ENCODE measurements at regions of chr1 and their contacts with region 1.

Region 1: GRCh38 chr1:47189844-47190508 is at the start of gene PDZK1IP1:
- DNase-seq: peak; percentile 91 to 94 (median 94)
- ATAC-seq: peak; percentile 83
- H3K4me3 ChIP-seq: no peak within 1 kb of the TSS
- H3K27ac ChIP-seq: peak within 1 kb of the TSS; percentile 84 to 92 (median 88)
- H3K4me1 ChIP-seq: peaks cover 45% of the 10 kb centered on the region
- H3K27me3 ChIP-seq: no peaks in the 10 kb centered on the region
- CTCF ChIP-seq: peak in 1 of 7 experiments; percentile 1
- POLR2A ChIP-seq: peak in 2 of 3 donors; percentile 57 to 71
- total RNA-seq, gene PDZK1IP1: 54.2 to 56.4 TPM

Region 2: DNA sequence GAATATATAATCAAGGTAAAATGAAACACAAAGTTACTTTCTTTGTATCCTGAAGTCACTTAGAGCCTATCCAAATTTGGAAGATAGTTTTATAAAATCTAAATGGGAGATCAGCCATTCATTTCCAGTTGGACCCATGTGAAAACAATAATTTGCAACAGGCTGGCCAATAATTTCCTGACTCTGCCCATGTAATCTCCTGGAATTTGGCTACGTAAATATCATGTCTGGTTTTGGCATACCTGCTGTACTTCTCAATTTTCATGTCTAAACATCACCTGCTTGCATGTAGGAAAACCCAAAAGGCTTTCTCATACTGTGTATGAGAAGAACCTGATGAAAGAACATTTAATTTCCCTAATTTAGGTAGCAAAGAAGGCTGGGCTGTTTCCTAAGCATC is 130.6 kb before region 1 on chr1:
- intact Hi-C with region 1: no loop called
- DNase-seq: no peak
- ATAC-seq: no peak
- H3K4me3 ChIP-seq: no peak overlapping the region
- H3K27ac ChIP-seq: no peak overlapping the region
- H3K4me1 ChIP-seq: no peaks in the 10 kb centered on the region
- H3K27me3 ChIP-seq: no peaks in the 10 kb centered on the region
- CTCF ChIP-seq: no peak
- POLR2A ChIP-seq: no peak

Region 3: GRCh38 chr1:47128221-47128620 is 61.8 kb before region 1 on chr1:
- intact Hi-C with region 1: no loop called
- DNase-seq: no peak
- ATAC-seq: no peak
- H3K4me3 ChIP-seq: no peak overlapping the region
- H3K27ac ChIP-seq: no peak overlapping the region
- H3K4me1 ChIP-seq: no peaks in the 10 kb centered on the region
- H3K27me3 ChIP-seq: no peaks in the 10 kb centered on the region
- CTCF ChIP-seq: no peak
- POLR2A ChIP-seq: no peak

Region 4: DNA sequence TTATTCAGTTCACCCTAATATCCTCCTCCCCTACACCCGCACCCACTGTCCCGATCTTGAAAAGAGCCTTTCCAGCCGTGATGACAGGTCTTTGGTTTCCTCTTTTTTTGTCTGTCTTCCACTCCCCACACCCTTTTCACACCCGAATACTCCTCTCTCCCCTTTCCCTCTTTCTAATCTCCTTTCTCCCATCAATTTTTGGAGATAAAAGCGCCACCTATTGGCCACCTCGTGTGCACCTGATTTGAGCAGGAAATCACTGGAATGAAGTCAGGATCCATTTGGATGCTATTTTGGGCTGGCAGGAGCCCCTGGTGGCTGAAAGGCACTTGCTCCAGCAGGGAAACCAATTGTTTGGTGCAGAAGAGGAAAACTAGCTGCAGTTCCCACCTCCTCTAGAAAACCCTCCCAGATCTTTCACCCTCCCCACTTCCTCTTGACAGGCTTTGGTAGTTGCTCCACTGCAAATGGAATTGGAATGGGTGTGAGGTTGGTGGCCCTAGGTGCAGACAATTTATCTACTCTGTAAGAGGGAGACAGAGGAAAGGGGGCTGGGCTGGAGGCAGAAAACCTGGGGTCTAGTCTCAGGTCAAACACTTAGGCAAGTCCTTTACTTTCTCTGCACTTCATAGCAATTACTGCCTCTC is 234.5 kb after region 1 on chr1:
- intact Hi-C with region 1: loop called (anchors 10 kb)
- DNase-seq: peak in 3 of 4 donors; percentile 29 to 33 (median 31)
- ATAC-seq: peak; percentile 52
- H3K4me3 ChIP-seq: no peak overlapping the region
- H3K27ac ChIP-seq: no peak overlapping the region
- H3K4me1 ChIP-seq: no peaks in the 10 kb centered on the region
- H3K27me3 ChIP-seq: no peaks in the 10 kb centered on the region
- CTCF ChIP-seq: peak in 6 of 7 experiments; percentile 57 to 76 (median 65)
- POLR2A ChIP-seq: no peak

Region 5: GRCh38 chr1:47725992-47726855 is 536.2 kb after region 1 on chr1:
- intact Hi-C with region 1: loop called (anchors 10 kb)
- DNase-seq: peak; percentile 78 to 85 (median 80)
- ATAC-seq: peak; percentile 87
- H3K4me3 ChIP-seq: no peak overlapping the region
- H3K27ac ChIP-seq: no peak overlapping the region
- H3K4me1 ChIP-seq: peaks cover 15% of the 10 kb centered on the region
- H3K27me3 ChIP-seq: peaks cover 0 to 10% of the 10 kb centered on the region in 2 donors
- CTCF ChIP-seq: peak; percentile 56 to 83 (median 80)
- POLR2A ChIP-seq: no peak

Measured in body of pancreas (tissue), 4 donors.